ENCODE measurements at regions of chr10 and their contacts with region 1.

Region 1: GRCh38 chr10:97407211-97407951 is 6.2 kb upstream of the RRP12 start:
- DNase-seq: peak; percentile 68 to 85 (median 74)
- ATAC-seq: peak; percentile 97
- H3K4me3 ChIP-seq: 0 out of 2 replicates have a peak overlapping the region, but pooled peaks have one; percentile 5
- H3K27ac ChIP-seq: no peak overlapping the region
- H3K4me1 ChIP-seq: peaks cover 16 to 18% of the 10 kb centered on the region in 2 experiments; a peak in 3 of 5 replicates
- H3K27me3 ChIP-seq: no peaks in the 10 kb centered on the region
- CTCF ChIP-seq: peak; percentile 72 to 91 (median 90)
- EP300 ChIP-seq: no peak
- POLR2A ChIP-seq: no peak
- RAD21 ChIP-seq: peak; percentile 64 to 77

Region 2: DNA sequence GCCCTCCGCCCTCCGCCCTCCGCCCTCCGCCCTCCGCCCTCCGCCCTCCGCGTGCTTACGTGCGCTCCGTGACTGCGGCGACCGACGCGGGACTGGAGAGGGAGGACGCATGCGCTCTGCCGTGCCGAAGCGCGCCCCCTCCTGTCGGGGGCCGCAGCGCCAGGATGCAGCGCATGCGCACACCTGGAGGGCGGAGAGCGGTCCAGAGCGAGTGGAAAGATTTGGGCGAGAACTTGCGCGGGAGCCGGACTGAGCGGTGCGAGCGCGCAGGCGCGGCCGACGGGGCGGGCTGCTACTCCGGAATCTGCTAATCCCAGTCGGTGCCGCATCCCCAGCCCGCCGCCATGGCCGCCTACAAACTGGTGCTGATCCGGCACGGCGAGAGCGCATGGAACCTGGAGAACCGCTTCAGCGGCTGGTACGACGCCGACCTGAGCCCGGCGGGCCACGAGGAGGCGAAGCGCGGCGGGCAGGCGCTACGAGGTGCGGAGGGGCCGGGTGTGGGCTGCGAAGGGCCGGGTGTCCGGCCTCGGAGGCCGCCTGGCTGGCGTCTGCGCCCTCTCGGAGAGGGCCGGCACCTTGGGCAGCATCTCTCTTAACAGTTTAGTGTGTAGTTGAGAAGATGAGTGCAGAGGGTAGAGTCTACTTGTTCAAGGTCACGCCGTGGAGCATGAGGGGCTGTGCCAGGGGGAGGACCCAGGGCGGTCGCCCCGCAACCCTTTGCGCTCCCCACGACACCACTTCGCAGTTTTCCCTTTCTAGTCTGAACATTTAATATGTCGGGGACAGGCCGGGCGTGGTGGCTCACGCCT is 18.8 kb after region 1 on chr10 and contains the start of gene PGAM1:
- CTCF ChIA-PET with region 1: interaction called, 4 read pairs
- POLR2A ChIA-PET with region 1: interaction called, 6 read pairs
- in situ Hi-C with region 1: no loop called
- intact Hi-C with region 1: loop called (anchors 1 kb)
- DNase-seq: peak; percentile 93 to 99 (median 98)
- ATAC-seq: peak; percentile 95
- H3K4me3 ChIP-seq: peak within 1 kb of the TSS; percentile 90
- H3K27ac ChIP-seq: peak within 1 kb of the TSS; percentile 89
- H3K4me1 ChIP-seq: peaks cover 6 to 12% of the 10 kb centered on the region in 2 experiments; a peak in 3 of 5 replicates
- H3K27me3 ChIP-seq: no peaks in the 10 kb centered on the region
- CTCF ChIP-seq: peak; percentile 62 to 87 (median 78)
- EP300 ChIP-seq: no peak
- POLR2A ChIP-seq: peak; percentile 85
- RAD21 ChIP-seq: 0 out of 4 replicates have a peak, but pooled peaks of 1 of the 2 experiments have one; percentile 5
- polyA plus RNA-seq, gene PGAM1: 40.3 to 80.0 TPM

Region 3: GRCh38 chr10:97445722-97446639 is 38.6 kb after region 1 on chr10 and contains the starts of genes EXOSC1 and ZDHHC16:
- CTCF ChIA-PET with region 1: interaction called, 5 read pairs
- POLR2A ChIA-PET with region 1: no interaction called
- in situ Hi-C with region 1: no loop called
- intact Hi-C with region 1: loop called (anchors 1 kb)
- DNase-seq: peak; percentile 91 to 98 (median 92)
- ATAC-seq: peak; percentile 99
- H3K4me3 ChIP-seq: peak within 1 kb of the TSS; percentile 94
- H3K27ac ChIP-seq: peak within 1 kb of the TSS; percentile 56
- H3K4me1 ChIP-seq: peaks cover 9 to 10% of the 10 kb centered on the region in 2 experiments; a peak in 3 of 5 replicates
- H3K27me3 ChIP-seq: no peaks in the 10 kb centered on the region
- CTCF ChIP-seq: peak in 1 of 3 experiments; percentile 23; a peak in 1 of 6 replicates
- EP300 ChIP-seq: no peak
- POLR2A ChIP-seq: peak; percentile 77
- RAD21 ChIP-seq: no peak
- polyA plus RNA-seq, gene EXOSC1: 112 to 117 TPM
- polyA plus RNA-seq, gene ZDHHC16: 12.5 to 14.2 TPM

Region 4: DNA sequence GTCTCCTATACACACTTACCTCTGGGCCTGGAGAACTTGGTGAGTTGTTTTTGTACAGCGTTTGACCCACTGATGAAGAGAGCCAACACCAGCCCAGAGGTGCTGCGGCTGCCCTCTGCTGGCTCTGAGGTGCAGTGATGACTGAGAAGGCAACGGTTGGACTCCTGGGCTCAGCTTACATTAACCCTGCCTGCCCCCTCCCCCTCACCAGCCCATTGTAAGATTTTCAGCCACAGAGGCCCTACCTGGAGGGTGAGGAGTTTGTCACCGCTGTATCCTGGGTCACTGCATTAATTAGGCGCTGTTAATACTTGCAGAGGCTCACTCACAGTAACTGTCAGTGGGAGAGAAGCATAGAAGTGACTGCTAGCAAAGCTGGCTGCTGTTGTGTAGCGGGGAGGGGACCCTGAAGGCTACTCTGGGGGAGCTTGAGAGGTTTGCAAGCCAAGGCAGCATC is 146.2 kb after region 1 on chr10:
- CTCF ChIA-PET with region 1: interaction called, 10 read pairs
- POLR2A ChIA-PET with region 1: no interaction called
- in situ Hi-C with region 1: no loop called
- intact Hi-C with region 1: loop called (anchors 5 kb)
- DNase-seq: peak; percentile 35 to 66 (median 52)
- ATAC-seq: peak; percentile 96
- H3K4me3 ChIP-seq: no peak overlapping the region
- H3K27ac ChIP-seq: no peak overlapping the region
- H3K4me1 ChIP-seq: no peaks in the 10 kb centered on the region; a peak in 2 of 5 replicates
- H3K27me3 ChIP-seq: no peaks in the 10 kb centered on the region
- CTCF ChIP-seq: peak; percentile 75 to 81 (median 80)
- EP300 ChIP-seq: no peak
- POLR2A ChIP-seq: no peak
- RAD21 ChIP-seq: peak; percentile 25 to 77; a peak in 2 of 4 replicates